AG04450 (cell line): ENCODE measurements at regions of chr4 and their contacts with region 1.

Region 1: GRCh38 chr4:121360495-121360894 is 20.3 kb downstream of the QRFPR start:
- DNase-seq: no peak
- H3K4me3 ChIP-seq: no peak overlapping the region
- H3K27ac ChIP-seq: no peak overlapping the region
- H3K27me3 ChIP-seq: no peaks in the 10 kb centered on the region
- CTCF ChIP-seq: no peak

Region 2: GRCh38 chr4:121370729-121371325 is 10.3 kb after region 1 on chr4:
- CTCF ChIA-PET with region 1: interaction called, 16 read pairs
- POLR2A ChIA-PET with region 1: no interaction called
- DNase-seq: peak; percentile 1
- H3K4me3 ChIP-seq: no peak overlapping the region
- H3K27ac ChIP-seq: no peak overlapping the region
- H3K27me3 ChIP-seq: no peaks in the 10 kb centered on the region
- CTCF ChIP-seq: peak; percentile 65